PC-9 (cell line): ENCODE measurements at regions of chr12 and their contacts with region 1.

Region 1: GRCh38 chr12:67515679-67516340 is 132.7 kb upstream of the DYRK2 start:
- DNase-seq: peak; percentile 3 to 70
- H3K4me3 ChIP-seq: no peak overlapping the region
- H3K27ac ChIP-seq: peak overlapping the region; percentile 70; the same call in 1 of the 2 replicates
- H3K4me1 ChIP-seq: peaks cover 48% of the 10 kb centered on the region
- H3K27me3 ChIP-seq: no peaks in the 10 kb centered on the region
- CTCF ChIP-seq: no peak

Region 2: GRCh38 chr12:67592216-67593011 is 76.6 kb after region 1 on chr12:
- CTCF ChIA-PET with region 1: no interaction called
- POLR2A ChIA-PET with region 1: no interaction called
- intact Hi-C with region 1: loop called (anchors 2 kb)
- DNase-seq: peak; percentile 29 to 61
- H3K4me3 ChIP-seq: peak overlapping the region; percentile 28; the same call in 1 of the 2 replicates
- H3K27ac ChIP-seq: peak overlapping the region; percentile 98
- H3K4me1 ChIP-seq: peaks cover 47% of the 10 kb centered on the region
- H3K27me3 ChIP-seq: no peaks in the 10 kb centered on the region
- CTCF ChIP-seq: no peak